ENCODE measurements at regions of chr10 and their contacts with region 1.

Region 1: GRCh38 chr10:17910125-17910789 is 41.5 kb upstream of the SLC39A12 start:
- DNase-seq: peak; percentile 51 to 63
- H3K4me3 ChIP-seq: no peak overlapping the region
- H3K4me3 Mint-ChIP-seq: no peak overlapping the region
- H3K27ac Mint-ChIP-seq: no peak overlapping the region
- H3K4me1 ChIP-seq: no peaks in the 10 kb centered on the region
- H3K4me1 Mint-ChIP-seq: no peaks in the 10 kb centered on the region
- H3K27me3 ChIP-seq: no peaks in the 10 kb centered on the region
- H3K27me3 Mint-ChIP-seq: peaks cover 18% of the 10 kb centered on the region
- CTCF ChIP-seq: peak; percentile 84

Region 2: GRCh38 chr10:17961551-17962422 is 51.5 kb after region 1 on chr10:
- CTCF ChIA-PET with region 1: no interaction called
- POLR2A ChIA-PET with region 1: no interaction called
- intact Hi-C with region 1: no loop called
- DNase-seq: no peak
- H3K4me3 ChIP-seq: no peak overlapping the region
- H3K4me3 Mint-ChIP-seq: no peak overlapping the region
- H3K27ac Mint-ChIP-seq: no peak overlapping the region
- H3K4me1 ChIP-seq: no peaks in the 10 kb centered on the region
- H3K4me1 Mint-ChIP-seq: no peaks in the 10 kb centered on the region
- H3K27me3 ChIP-seq: no peaks in the 10 kb centered on the region; the same call in 1 of the 2 replicates
- H3K27me3 Mint-ChIP-seq: peaks cover 22% of the 10 kb centered on the region
- CTCF ChIP-seq: no peak

Region 3: DNA sequence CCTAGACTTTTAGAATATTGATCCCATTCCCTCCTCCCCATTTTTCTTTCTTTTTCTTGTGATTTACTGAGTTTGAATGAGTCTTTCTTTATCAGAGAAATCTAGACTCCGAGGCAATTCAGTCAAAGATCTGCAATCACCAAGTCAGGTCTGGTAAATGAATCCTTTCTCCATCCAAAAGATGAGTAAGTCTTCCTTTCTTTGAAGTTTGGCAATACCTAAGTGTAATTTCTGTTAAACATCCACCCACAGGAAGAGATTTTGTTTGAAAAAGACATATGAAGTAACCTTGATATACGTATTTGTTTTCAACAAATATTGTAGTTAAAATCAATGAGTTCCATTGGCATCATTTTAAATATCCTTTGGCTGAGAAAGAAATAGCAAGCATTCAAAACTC is 99.8 kb after region 1 on chr10:
- CTCF ChIA-PET with region 1: no interaction called
- POLR2A ChIA-PET with region 1: no interaction called
- intact Hi-C with region 1: loop called (anchors 10 kb)
- DNase-seq: no peak
- H3K4me3 ChIP-seq: no peak overlapping the region
- H3K4me3 Mint-ChIP-seq: no peak overlapping the region
- H3K27ac Mint-ChIP-seq: no peak overlapping the region
- H3K4me1 ChIP-seq: no peaks in the 10 kb centered on the region
- H3K4me1 Mint-ChIP-seq: no peaks in the 10 kb centered on the region
- H3K27me3 ChIP-seq: no peaks in the 10 kb centered on the region
- H3K27me3 Mint-ChIP-seq: peaks cover 14% of the 10 kb centered on the region
- CTCF ChIP-seq: no peak

Region 4: GRCh38 chr10:18104223-18104872 is 194.1 kb after region 1 on chr10:
- CTCF ChIA-PET with region 1: no interaction called
- POLR2A ChIA-PET with region 1: no interaction called
- intact Hi-C with region 1: loop called (anchors 1 kb)
- DNase-seq: peak; percentile 49 to 65
- H3K4me3 ChIP-seq: no peak overlapping the region
- H3K4me3 Mint-ChIP-seq: no peak overlapping the region
- H3K27ac Mint-ChIP-seq: no peak overlapping the region
- H3K4me1 ChIP-seq: no peaks in the 10 kb centered on the region
- H3K4me1 Mint-ChIP-seq: no peaks in the 10 kb centered on the region
- H3K27me3 ChIP-seq: no peaks in the 10 kb centered on the region
- H3K27me3 Mint-ChIP-seq: peaks cover 14% of the 10 kb centered on the region
- CTCF ChIP-seq: peak; percentile 86 to 90

Region 5: GRCh38 chr10:18238870-18239485 is 328.7 kb after region 1 on chr10:
- CTCF ChIA-PET with region 1: no interaction called
- POLR2A ChIA-PET with region 1: no interaction called
- intact Hi-C with region 1: loop called (anchors 2 kb)
- DNase-seq: peak in 1 of 2 experiments; percentile 28
- H3K4me3 ChIP-seq: no peak overlapping the region
- H3K4me3 Mint-ChIP-seq: no peak overlapping the region
- H3K27ac Mint-ChIP-seq: no peak overlapping the region
- H3K4me1 ChIP-seq: no peaks in the 10 kb centered on the region
- H3K4me1 Mint-ChIP-seq: no peaks in the 10 kb centered on the region
- H3K27me3 ChIP-seq: no peaks in the 10 kb centered on the region
- H3K27me3 Mint-ChIP-seq: peaks cover 19% of the 10 kb centered on the region
- CTCF ChIP-seq: peak; percentile 74 to 80

Region 6: GRCh38 chr10:18312374-18313139 is 402.3 kb after region 1 on chr10:
- CTCF ChIA-PET with region 1: no interaction called
- POLR2A ChIA-PET with region 1: no interaction called
- intact Hi-C with region 1: loop called (anchors 5 kb)
- DNase-seq: peak in 1 of 2 experiments; percentile 29
- H3K4me3 ChIP-seq: no peak overlapping the region
- H3K4me3 Mint-ChIP-seq: no peak overlapping the region
- H3K27ac Mint-ChIP-seq: no peak overlapping the region
- H3K4me1 ChIP-seq: no peaks in the 10 kb centered on the region
- H3K4me1 Mint-ChIP-seq: no peaks in the 10 kb centered on the region
- H3K27me3 ChIP-seq: peaks cover 2% of the 10 kb centered on the region
- H3K27me3 Mint-ChIP-seq: peaks cover 15% of the 10 kb centered on the region
- CTCF ChIP-seq: peak; percentile 46 to 71